CD8-positive, alpha-beta T cell (primary cell): ENCODE measurements at regions of chr1 and their contacts with region 1.

Region 1: DNA sequence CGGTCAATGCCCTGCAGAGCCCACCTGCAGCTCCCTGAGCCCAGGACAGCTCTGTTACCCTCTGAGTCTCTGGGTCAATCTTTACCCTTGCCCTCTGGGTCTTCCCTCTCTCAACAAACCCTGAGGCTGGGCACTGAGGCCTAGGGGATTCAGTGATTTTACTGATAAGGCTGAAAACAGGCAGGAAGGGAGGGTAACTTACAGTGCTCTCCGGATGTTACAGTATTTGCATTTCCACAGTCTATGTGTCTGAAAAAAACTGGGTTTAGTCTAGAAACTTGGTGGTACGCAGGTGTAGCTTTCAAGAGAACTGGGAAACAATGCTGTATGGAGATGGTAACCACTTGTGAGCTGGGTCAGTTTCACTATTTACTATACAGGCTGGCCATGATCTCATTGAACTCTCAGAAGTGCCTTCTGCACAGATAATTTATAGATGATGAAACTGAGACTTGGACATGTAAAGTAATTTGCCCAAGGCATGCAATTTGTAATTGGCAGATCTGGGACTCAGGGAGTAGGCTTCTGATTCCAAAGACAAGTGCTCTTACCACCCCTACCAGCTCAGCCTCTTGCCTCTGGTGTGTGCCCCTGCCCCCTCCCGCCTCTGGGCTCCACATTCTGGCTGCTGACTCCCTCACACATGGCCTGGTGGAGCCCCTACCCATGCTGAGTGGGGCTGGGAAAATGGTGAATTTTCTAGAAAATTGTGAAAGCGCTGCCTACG is 48.8 kb downstream of the TENT5C start:
- DNase-seq: peak in 2 of 9 experiments; percentile 40 to 64
- ATAC-seq: peak; percentile 7
- H3K4me3 ChIP-seq: no peak overlapping the region
- H3K4me3 Mint-ChIP-seq: peak overlapping the region; percentile 40
- H3K27ac ChIP-seq: peak overlapping the region in 1 of 2 experiments; percentile 70
- H3K27ac Mint-ChIP-seq: peak overlapping the region; percentile 94
- H3K4me1 ChIP-seq: peaks cover 69% of the 10 kb centered on the region
- H3K4me1 Mint-ChIP-seq: peaks cover 83% of the 10 kb centered on the region
- H3K27me3 ChIP-seq: peaks cover 2 to 10% of the 10 kb centered on the region in 2 experiments
- H3K27me3 Mint-ChIP-seq: peaks cover 30% of the 10 kb centered on the region
- CTCF ChIP-seq: no peak

Region 2: GRCh38 chr1:116763787-116764465 is 890.7 kb before region 1 on chr1:
- CTCF ChIA-PET with region 1: interaction called, 3 read pairs
- POLR2A ChIA-PET with region 1: no interaction called
- intact Hi-C with region 1: loop called in 1 of 2 experiments (anchors 5 kb)
- DNase-seq: peak in 4 of 9 experiments; percentile 45 to 74 (median 58)
- ATAC-seq: peak; percentile 10
- H3K4me3 ChIP-seq: peak overlapping the region; percentile 18 to 22
- H3K4me3 Mint-ChIP-seq: peak overlapping the region; percentile 75
- H3K27ac ChIP-seq: peak overlapping the region; percentile 57 to 87
- H3K27ac Mint-ChIP-seq: peak overlapping the region; percentile 96
- H3K4me1 ChIP-seq: peaks cover 96% of the 10 kb centered on the region
- H3K4me1 Mint-ChIP-seq: peaks cover 96% of the 10 kb centered on the region
- H3K27me3 ChIP-seq: no peaks in the 10 kb centered on the region
- H3K27me3 Mint-ChIP-seq: no peaks in the 10 kb centered on the region
- CTCF ChIP-seq: peak; percentile 22

Region 3: GRCh38 chr1:117638759-117639158 is 15.9 kb before region 1 on chr1:
- CTCF ChIA-PET with region 1: interaction called, 11 read pairs
- POLR2A ChIA-PET with region 1: interaction called, 6 read pairs
- intact Hi-C with region 1: loop called in 1 of 2 experiments (anchors 2 kb)
- DNase-seq: peak in 1 of 9 experiments; percentile 32
- ATAC-seq: no peak
- H3K4me3 ChIP-seq: no peak overlapping the region
- H3K4me3 Mint-ChIP-seq: no peak overlapping the region
- H3K27ac ChIP-seq: no peak overlapping the region
- H3K27ac Mint-ChIP-seq: no peak overlapping the region
- H3K4me1 ChIP-seq: peaks cover 5% of the 10 kb centered on the region
- H3K4me1 Mint-ChIP-seq: peaks cover 10% of the 10 kb centered on the region
- H3K27me3 ChIP-seq: no peaks in the 10 kb centered on the region
- H3K27me3 Mint-ChIP-seq: peaks cover 14% of the 10 kb centered on the region
- CTCF ChIP-seq: no peak

Region 4: DNA sequence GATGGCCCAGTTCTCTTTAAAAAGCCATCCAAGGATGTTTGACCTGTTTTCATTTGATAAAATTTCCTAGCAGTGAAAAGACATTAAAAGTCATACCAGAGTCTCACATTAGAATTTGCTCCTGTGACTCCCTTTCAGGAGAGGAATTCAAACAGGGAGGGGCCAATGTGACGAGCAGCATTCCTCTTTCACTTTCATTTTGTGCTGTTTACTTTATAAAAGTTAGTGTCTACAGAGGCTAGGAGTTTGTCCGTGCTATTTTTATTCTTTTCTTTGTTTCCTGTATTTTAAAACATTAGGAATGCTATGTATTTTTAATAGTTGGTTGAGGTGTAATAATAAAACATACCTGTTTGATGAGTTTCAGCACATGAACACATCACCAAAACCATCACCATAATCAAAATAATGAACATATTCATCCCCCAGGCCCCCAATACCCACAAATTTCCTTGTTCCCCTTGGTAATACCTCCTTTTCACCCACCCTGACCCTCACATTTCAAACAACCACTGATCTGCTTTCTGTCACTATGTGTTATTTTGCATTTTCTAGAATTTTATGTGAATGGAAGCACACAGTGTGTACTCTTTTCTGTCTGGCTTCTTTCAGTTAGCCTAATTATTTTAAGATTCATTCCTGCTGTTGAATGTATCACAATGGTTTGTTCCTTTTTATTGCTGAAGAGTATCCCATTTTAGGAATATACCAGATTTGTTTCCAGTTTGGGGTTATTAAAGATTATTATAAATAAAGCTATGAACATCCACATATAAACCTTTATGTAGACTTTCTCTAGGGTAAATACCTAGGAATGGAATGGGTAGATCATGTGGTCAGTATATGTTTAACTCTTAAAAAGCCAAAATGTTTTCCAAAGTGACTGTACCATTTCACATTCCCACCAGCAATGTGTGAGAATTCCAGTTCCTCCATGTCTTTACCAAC is 80.7 kb after region 1 on chr1:
- CTCF ChIA-PET with region 1: no interaction called
- POLR2A ChIA-PET with region 1: no interaction called
- intact Hi-C with region 1: loop called in 1 of 2 experiments (anchors 5 kb)
- DNase-seq: peak in 4 of 9 experiments; percentile 25 to 77 (median 52)
- ATAC-seq: peak; percentile 62
- H3K4me3 ChIP-seq: peak overlapping the region; percentile 22 to 38
- H3K4me3 Mint-ChIP-seq: peak overlapping the region; percentile 88
- H3K27ac ChIP-seq: peak overlapping the region; percentile 26 to 76
- H3K27ac Mint-ChIP-seq: peak overlapping the region; percentile 97
- H3K4me1 ChIP-seq: peaks cover 4% of the 10 kb centered on the region
- H3K4me1 Mint-ChIP-seq: peaks cover 22% of the 10 kb centered on the region
- H3K27me3 ChIP-seq: no peaks in the 10 kb centered on the region
- H3K27me3 Mint-ChIP-seq: no peaks in the 10 kb centered on the region
- CTCF ChIP-seq: no peak

Region 5: DNA sequence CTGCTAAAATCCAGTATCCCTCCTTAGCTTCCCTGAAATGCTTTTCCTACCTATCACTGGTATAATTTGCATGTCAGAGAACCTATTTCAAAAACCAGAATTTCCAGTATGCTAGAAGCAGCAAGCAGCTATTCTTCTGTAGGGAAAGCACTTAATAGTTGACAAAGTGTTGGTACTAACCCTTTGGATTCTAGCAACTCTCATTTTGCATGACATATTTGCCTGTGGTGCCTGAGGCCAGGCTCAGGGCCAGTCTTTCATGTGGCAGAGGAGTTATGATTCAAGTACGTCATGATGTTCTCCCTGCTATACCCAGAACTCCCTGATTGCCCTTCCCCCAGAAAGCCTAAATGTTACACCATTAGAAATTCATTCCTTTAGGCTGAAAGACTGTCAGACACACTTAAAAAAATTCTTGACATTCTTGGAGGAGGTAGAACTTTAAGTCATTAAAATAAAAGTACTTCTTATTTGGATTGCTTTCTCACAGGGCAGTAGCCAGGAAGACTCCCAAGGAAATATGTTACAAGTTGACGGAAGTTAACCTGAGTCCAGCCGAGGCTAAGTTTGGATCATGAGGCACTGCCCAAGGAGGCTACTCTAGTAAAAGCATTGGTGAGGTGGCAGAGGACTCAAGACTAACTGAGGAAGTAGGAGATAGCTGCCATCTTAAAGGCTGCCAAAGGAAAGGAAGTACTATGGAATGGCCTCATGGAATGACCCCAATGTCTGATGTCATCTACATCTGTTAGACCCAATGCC is 828.8 kb after region 1 on chr1:
- CTCF ChIA-PET with region 1: no interaction called
- POLR2A ChIA-PET with region 1: no interaction called
- intact Hi-C with region 1: no loop called
- DNase-seq: no peak
- ATAC-seq: no peak
- H3K4me3 ChIP-seq: no peak overlapping the region
- H3K4me3 Mint-ChIP-seq: no peak overlapping the region
- H3K27ac ChIP-seq: no peak overlapping the region
- H3K27ac Mint-ChIP-seq: no peak overlapping the region
- H3K4me1 ChIP-seq: no peaks in the 10 kb centered on the region
- H3K4me1 Mint-ChIP-seq: no peaks in the 10 kb centered on the region
- H3K27me3 ChIP-seq: no peaks in the 10 kb centered on the region
- H3K27me3 Mint-ChIP-seq: no peaks in the 10 kb centered on the region
- CTCF ChIP-seq: no peak